ENCODE measurements at regions of chr19 and their contacts with region 1.

Region 1: DNA sequence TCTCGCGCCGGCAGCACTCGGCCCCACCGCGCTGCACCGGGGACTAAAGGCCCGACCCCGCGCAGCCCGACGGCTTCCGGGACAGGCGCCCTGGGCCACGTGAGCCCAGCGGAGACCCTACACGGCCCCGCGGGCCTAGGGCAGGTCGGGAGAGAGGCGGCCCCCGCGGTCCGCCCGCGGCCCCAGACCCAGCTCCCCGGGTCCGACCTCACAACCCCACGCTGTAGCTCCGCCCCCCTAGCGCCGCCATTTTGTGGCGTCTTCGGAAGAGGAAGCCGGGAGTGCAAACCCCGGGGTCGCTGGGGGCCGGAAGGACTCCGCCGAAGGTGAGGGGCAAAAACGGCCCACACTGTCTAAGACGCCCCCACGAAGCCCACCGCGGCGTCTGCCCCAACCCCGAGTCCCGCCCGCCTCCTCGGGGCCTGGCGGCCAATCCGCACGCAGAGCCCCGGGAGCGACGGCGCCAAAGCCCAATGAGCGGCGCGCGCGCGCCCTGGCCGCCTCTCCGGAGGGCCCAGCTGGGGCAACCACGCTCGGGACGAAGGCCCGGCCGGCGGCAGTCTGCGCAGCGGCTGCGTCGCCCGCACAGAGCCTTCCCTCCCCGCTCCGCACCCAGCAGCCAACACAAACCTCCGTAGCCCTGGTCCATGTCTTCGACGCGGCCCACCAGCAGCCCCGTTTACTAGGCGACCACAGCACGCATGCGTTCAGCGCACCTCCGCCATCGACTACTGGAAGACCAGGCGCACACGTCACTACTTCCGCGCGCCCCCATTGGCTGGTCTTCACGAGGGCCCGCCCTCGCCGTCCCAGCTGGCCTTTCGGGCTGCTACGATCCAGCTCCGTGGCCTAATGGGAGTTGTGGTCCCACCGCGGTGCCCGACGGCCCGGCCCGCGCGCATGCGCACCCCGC is at the start of gene AKAP8:
- DNase-seq: peak; percentile 98
- H3K4me3 Mint-ChIP-seq: peak within 1 kb of the TSS; percentile 93
- H3K27ac Mint-ChIP-seq: peak within 1 kb of the TSS; percentile 96
- H3K4me1 Mint-ChIP-seq: peaks cover 48% of the 10 kb centered on the region
- H3K27me3 Mint-ChIP-seq: no peaks in the 10 kb centered on the region
- total RNA-seq, gene AKAP8: 27.1 to 30.3 TPM

Region 2: GRCh38 chr19:15125232-15126067 is 253.9 kb before region 1 on chr19:
- CTCF ChIA-PET with region 1: no interaction called
- intact Hi-C with region 1: loop called (anchors 2 kb)
- DNase-seq: peak; percentile 99
- H3K4me3 Mint-ChIP-seq: peak overlapping the region; percentile 88
- H3K27ac Mint-ChIP-seq: peak overlapping the region; percentile 94
- H3K4me1 Mint-ChIP-seq: peaks cover 31% of the 10 kb centered on the region
- H3K27me3 Mint-ChIP-seq: no peaks in the 10 kb centered on the region

Region 3: GRCh38 chr19:15264061-15264932 is 115.0 kb before region 1 on chr19:
- CTCF ChIA-PET with region 1: interaction called, 3 read pairs
- intact Hi-C with region 1: loop called (anchors 1 kb)
- DNase-seq: peak; percentile 82
- H3K4me3 Mint-ChIP-seq: no peak overlapping the region
- H3K27ac Mint-ChIP-seq: no peak overlapping the region
- H3K4me1 Mint-ChIP-seq: peaks cover 6% of the 10 kb centered on the region
- H3K27me3 Mint-ChIP-seq: no peaks in the 10 kb centered on the region

Region 4: DNA sequence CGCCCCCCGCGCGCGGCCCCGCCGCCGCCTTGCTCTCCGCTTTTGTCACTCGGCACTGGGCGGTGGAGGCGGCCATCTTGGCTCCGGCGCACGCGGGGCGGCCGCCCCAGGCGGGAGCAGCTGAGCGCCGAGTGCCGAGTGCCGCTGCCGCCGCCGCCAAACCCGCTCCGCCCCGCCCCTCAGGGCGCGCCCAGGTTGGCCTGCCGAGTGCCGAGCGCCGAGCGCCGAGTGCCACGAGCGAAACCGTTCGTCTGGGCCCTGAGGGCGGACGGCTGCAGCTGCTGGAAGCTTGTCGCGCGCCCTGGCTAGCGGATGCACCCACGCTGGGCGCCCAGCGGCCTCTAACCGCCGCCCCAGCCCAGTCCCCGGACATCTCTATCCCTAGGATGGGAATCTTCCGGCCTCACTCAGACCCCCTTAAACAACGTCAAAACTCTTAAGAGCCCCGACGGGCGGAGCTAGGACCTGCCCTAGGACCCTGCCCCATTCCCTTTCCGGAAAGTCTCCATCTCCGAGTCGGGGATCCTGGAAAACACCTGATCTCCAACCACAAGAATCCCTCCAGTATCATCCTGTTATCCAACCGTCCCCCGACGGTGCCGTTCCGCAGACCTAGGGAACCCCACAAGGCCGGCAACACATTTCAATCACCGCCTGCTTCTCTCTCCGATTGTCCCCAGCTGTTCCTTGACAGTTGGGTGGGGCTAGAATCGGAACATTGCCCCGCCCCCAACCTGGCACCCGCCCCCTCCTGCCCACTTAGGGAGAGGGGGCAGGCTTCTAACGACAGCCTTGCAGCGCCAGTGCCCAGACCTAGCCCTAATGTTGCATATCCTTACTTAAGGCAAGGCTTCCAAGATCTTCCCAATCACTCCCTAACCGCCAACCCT is 53.5 kb after region 1 on chr19:
- CTCF ChIA-PET with region 1: no interaction called
- intact Hi-C with region 1: loop called (anchors 1 kb)
- DNase-seq: peak; percentile 93
- H3K4me3 Mint-ChIP-seq: peak overlapping the region; percentile 95
- H3K27ac Mint-ChIP-seq: peak overlapping the region; percentile 90
- H3K4me1 Mint-ChIP-seq: peaks cover 29% of the 10 kb centered on the region
- H3K27me3 Mint-ChIP-seq: no peaks in the 10 kb centered on the region

Region 5: GRCh38 chr19:15449620-15450527 is 70.5 kb after region 1 on chr19 and contains the start of gene WIZ:
- CTCF ChIA-PET with region 1: no interaction called
- intact Hi-C with region 1: no loop called
- DNase-seq: peak; percentile 80
- H3K4me3 Mint-ChIP-seq: peak within 1 kb of the TSS; percentile 75
- H3K27ac Mint-ChIP-seq: peak within 1 kb of the TSS; percentile 74
- H3K4me1 Mint-ChIP-seq: peaks cover 15% of the 10 kb centered on the region
- H3K27me3 Mint-ChIP-seq: no peaks in the 10 kb centered on the region
- total RNA-seq, gene WIZ: 16.5 to 16.7 TPM

Region 6: GRCh38 chr19:15544283-15544682 is 164.9 kb after region 1 on chr19:
- CTCF ChIA-PET with region 1: no interaction called
- intact Hi-C with region 1: no loop called
- DNase-seq: no peak
- H3K4me3 Mint-ChIP-seq: no peak overlapping the region
- H3K27ac Mint-ChIP-seq: no peak overlapping the region
- H3K4me1 Mint-ChIP-seq: no peaks in the 10 kb centered on the region
- H3K27me3 Mint-ChIP-seq: no peaks in the 10 kb centered on the region

Measured in activated naive CD4-positive, alpha-beta T cell treated with anti-CD3 and anti-CD28 coated beads for 36 hours (primary cell).